Activated CD4-positive, alpha-beta memory T cell treated with anti-CD3 and anti-CD28 coated beads for 36 hours (primary cell): ENCODE measurements at regions of chr14 and their contacts with region 1.

Region 1: DNA sequence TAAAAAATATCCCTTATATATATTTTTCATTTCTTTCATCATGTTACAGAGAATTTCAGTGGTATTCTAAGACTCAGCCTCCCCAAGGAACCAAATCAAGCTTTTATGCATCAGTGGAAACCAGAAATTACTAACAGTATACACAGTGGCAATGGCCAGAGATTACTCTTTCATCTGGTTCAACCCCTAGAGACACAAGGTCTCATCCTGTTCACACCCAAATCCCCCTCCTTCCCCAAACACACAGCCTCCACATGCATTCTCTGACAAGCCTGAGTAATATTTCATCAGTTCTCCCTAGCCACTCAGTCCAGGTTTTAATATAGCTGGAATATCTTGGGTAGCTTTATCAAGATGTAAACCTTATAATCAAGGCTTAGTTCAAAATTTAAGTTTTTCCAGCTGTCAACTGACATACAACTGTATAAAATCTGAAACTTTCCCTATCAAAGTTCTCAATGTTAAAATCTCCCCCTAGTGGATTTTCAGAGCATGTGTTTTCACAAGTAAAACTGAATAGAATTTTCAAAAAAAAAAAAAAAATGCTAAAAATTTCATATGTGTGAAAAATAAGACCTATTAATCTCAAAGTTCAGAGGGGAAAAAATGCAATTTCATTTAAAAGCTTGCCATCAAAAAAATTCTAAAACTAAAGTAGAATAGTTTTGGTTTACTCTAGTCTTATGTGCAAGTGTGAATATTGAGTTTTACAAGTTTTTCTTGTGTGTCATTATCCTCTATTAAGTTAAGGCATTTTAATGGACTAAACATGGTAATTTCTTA is 10.5 kb upstream of the SSTR1 start:
- DNase-seq: no peak
- H3K4me3 Mint-ChIP-seq: no peak overlapping the region
- H3K27ac Mint-ChIP-seq: no peak overlapping the region
- H3K4me1 Mint-ChIP-seq: peaks cover 14% of the 10 kb centered on the region
- H3K27me3 Mint-ChIP-seq: no peaks in the 10 kb centered on the region

Region 2: GRCh38 chr14:37903343-37904191 is 293.6 kb before region 1 on chr14:
- CTCF ChIA-PET with region 1: interaction called, 11 read pairs
- POLR2A ChIA-PET with region 1: no interaction called
- intact Hi-C with region 1: loop called (anchors 5 kb)
- DNase-seq: peak; percentile 13
- H3K4me3 Mint-ChIP-seq: no peak overlapping the region
- H3K27ac Mint-ChIP-seq: no peak overlapping the region
- H3K4me1 Mint-ChIP-seq: peaks cover 4% of the 10 kb centered on the region
- H3K27me3 Mint-ChIP-seq: peaks cover 9% of the 10 kb centered on the region

Region 3: GRCh38 chr14:38073641-38074040 is 123.6 kb before region 1 on chr14:
- CTCF ChIA-PET with region 1: no interaction called
- POLR2A ChIA-PET with region 1: no interaction called
- intact Hi-C with region 1: loop called (anchors 5 kb)
- DNase-seq: no peak
- H3K4me3 Mint-ChIP-seq: peak overlapping the region; percentile 26
- H3K27ac Mint-ChIP-seq: peak overlapping the region; percentile 70
- H3K4me1 Mint-ChIP-seq: peaks cover 69% of the 10 kb centered on the region
- H3K27me3 Mint-ChIP-seq: no peaks in the 10 kb centered on the region

Region 4: DNA sequence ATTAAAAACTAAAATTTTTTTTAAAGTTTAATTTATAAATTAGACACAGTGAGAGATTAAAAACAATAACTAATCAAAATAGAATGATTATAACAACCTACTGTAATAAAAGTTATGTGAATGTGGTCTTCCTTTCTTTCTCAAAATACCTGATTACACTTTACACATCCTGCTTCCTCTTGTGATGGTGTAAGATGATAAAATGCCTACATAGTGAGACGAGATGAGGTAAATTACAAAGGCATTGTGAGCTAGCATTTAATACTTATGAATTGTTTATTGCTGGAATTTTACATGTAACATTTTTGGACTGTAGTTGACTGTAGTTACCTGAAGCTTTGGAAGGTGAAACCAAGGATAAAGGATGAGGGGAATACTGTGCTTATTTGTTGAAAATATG is 152.9 kb after region 1 on chr14:
- CTCF ChIA-PET with region 1: no interaction called
- POLR2A ChIA-PET with region 1: no interaction called
- intact Hi-C with region 1: no loop called
- DNase-seq: no peak
- H3K4me3 Mint-ChIP-seq: no peak overlapping the region
- H3K27ac Mint-ChIP-seq: no peak overlapping the region
- H3K4me1 Mint-ChIP-seq: no peaks in the 10 kb centered on the region
- H3K27me3 Mint-ChIP-seq: peaks cover 3% of the 10 kb centered on the region